A673 (cell line): ENCODE measurements at regions of chr17 and their contacts with region 1.

Region 1: GRCh38 chr17:6843241-6843880 is 11.8 kb upstream of the TEKT1 start:
- DNase-seq: peak; percentile 69
- H3K4me3 ChIP-seq: no peak overlapping the region
- H3K27ac ChIP-seq: no peak overlapping the region
- H3K4me1 ChIP-seq: no peaks in the 10 kb centered on the region
- H3K27me3 ChIP-seq: peaks cover 43% of the 10 kb centered on the region
- CTCF ChIP-seq: peak; percentile 69

Region 2: GRCh38 chr17:6640536-6641373 is 202.6 kb before region 1 on chr17 and contains the starts of genes KIAA0753 and TXNDC17:
- CTCF ChIA-PET with region 1: no interaction called
- POLR2A ChIA-PET with region 1: no interaction called
- intact Hi-C with region 1: no loop called
- DNase-seq: peak; percentile 94
- H3K4me3 ChIP-seq: peak within 1 kb of the TSS; percentile 78
- H3K27ac ChIP-seq: peak within 1 kb of the TSS; percentile 95
- H3K4me1 ChIP-seq: peaks cover 19% of the 10 kb centered on the region
- H3K27me3 ChIP-seq: no peaks in the 10 kb centered on the region
- CTCF ChIP-seq: no peak
- total RNA-seq, gene KIAA0753: 41.2 and 42.8 TPM in 2 replicates
- total RNA-seq, gene TXNDC17: 140 and 147 TPM in 2 replicates

Region 3: GRCh38 chr17:6793748-6794493 is 49.4 kb before region 1 on chr17:
- CTCF ChIA-PET with region 1: no interaction called
- POLR2A ChIA-PET with region 1: no interaction called
- intact Hi-C with region 1: no loop called
- DNase-seq: no peak
- H3K4me3 ChIP-seq: no peak overlapping the region
- H3K27ac ChIP-seq: no peak overlapping the region
- H3K4me1 ChIP-seq: no peaks in the 10 kb centered on the region
- H3K27me3 ChIP-seq: peaks cover 36% of the 10 kb centered on the region
- CTCF ChIP-seq: no peak

Region 4: GRCh38 chr17:6894206-6894528 is 50.8 kb after region 1 on chr17:
- CTCF ChIA-PET with region 1: interaction called, 16 read pairs
- POLR2A ChIA-PET with region 1: no interaction called
- intact Hi-C with region 1: no loop called
- DNase-seq: peak; percentile 53
- H3K4me3 ChIP-seq: peak overlapping the region; percentile 11
- H3K27ac ChIP-seq: no peak overlapping the region
- H3K4me1 ChIP-seq: peaks cover 4% of the 10 kb centered on the region
- H3K27me3 ChIP-seq: peaks cover 32% of the 10 kb centered on the region
- CTCF ChIP-seq: peak; percentile 77

Region 5: GRCh38 chr17:6953689-6954088 is 110.3 kb after region 1 on chr17:
- CTCF ChIA-PET with region 1: no interaction called
- POLR2A ChIA-PET with region 1: no interaction called
- intact Hi-C with region 1: no loop called
- DNase-seq: no peak
- H3K4me3 ChIP-seq: no peak overlapping the region
- H3K27ac ChIP-seq: no peak overlapping the region
- H3K4me1 ChIP-seq: no peaks in the 10 kb centered on the region
- H3K27me3 ChIP-seq: peaks cover 3% of the 10 kb centered on the region
- CTCF ChIP-seq: no peak

Region 6: GRCh38 chr17:7004398-7005253 is 161.3 kb after region 1 on chr17:
- CTCF ChIA-PET with region 1: interaction called, 8 read pairs
- POLR2A ChIA-PET with region 1: no interaction called
- intact Hi-C with region 1: loop called (anchors 5 kb)
- DNase-seq: peak; percentile 87
- H3K4me3 ChIP-seq: no peak overlapping the region
- H3K27ac ChIP-seq: no peak overlapping the region
- H3K4me1 ChIP-seq: no peaks in the 10 kb centered on the region
- H3K27me3 ChIP-seq: no peaks in the 10 kb centered on the region
- CTCF ChIP-seq: peak; percentile 87